Right ventricle myocardium inferior (tissue), 1 donor: ENCODE measurements at regions of chr15 and their contacts with region 1.

Region 1: GRCh38 chr15:31335989-31336592 is 9.5 kb downstream of the KLF13 start:
- DNase-seq: no peak
- ATAC-seq: no peak

Region 2: DNA sequence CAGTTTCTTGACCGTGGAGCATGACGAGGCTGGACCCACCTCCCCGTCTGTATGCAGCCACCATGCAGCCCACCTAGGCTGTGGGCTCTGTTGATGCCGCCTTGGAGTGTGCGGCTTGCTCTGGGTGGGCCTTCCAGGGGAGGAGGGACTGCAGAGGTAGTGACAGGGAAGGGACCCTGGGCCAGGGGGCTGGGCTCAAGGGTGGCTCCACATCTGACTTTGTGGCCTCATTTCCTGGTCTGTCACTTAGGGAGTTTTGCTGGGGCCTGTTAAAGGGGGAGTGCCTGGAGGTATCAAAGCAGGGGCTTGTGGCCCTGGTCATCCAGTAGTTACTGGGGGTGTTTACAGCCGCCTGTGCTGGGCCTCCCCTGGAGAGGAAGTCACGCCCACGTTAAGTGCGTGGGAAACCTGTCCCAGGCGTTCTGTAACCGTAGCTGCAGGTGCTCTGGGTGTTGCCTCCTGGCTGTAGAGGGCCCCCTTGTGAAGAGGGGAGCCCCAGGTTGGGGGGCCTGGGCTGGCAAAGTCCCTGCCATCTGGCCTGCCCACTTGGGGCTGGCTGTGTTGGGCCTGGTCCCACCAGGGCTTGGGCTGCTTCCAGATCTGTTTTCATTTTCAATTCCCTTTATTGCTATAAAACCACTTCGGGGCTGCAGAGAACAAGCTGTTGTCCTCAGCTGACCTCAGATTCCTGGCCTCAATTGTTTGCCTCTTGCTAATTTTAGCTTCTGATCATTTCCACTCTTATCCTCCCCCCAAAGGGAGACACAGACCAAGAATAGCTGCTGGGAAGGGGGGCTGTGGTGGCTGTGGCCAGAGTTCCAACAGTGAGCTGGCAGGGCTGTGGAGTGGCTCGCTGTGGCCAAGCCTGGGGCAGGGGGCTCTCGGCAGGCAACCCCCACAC is 17.1 kb after region 1 on chr15:
- intact Hi-C with region 1: loop called (anchors 2 kb)
- DNase-seq: peak; percentile 81
- ATAC-seq: peak; percentile 82